ENCODE measurements at regions of chr5 and their contacts with region 1.

Region 1: DNA sequence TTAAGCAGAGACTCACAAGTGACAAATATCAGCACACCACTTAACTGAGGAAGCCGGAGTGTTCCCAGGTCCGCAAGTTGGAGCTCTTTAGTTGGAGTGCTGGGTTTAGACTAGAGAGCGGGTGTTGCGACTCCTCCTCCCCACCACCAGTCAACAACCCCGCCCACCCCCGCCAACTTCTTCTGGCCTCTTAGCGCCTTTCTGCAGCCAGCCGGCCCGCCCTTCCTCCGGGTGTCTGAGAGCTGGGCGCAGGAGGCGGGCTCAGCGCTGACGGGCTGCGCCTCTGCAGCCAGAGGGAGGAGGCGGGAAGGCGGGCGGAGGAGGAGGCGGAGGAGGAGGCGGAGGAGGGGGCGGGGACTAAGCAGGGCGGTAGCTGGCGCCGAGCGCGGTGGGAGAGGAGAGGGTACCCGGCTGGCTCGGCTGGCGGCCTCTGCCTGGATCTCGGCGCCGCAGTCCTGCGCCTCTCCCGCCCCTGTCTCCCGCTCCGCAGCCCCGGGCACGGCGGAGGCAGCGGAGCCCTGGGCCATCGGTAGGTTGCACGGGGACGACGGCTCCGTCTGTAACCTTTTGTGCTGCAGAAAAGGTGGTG is at the start of gene MACIR:
- DNase-seq: peak; percentile 99
- H3K4me3 ChIP-seq: peak within 1 kb of the TSS; percentile 47 to 75 (median 69)
- H3K27ac ChIP-seq: peak within 1 kb of the TSS; percentile 76
- H3K4me1 ChIP-seq: peaks cover 8% of the 10 kb centered on the region
- H3K27me3 ChIP-seq: no peaks in the 10 kb centered on the region
- CTCF ChIP-seq: no peak
- POLR2A ChIP-seq: peak; percentile 69
- total RNA-seq, gene MACIR: 9.3 and 9.6 TPM in 2 replicates

Region 2: GRCh38 chr5:103232393-103232999 is 26.0 kb before region 1 on chr5:
- CTCF ChIA-PET with region 1: interaction called, 28 read pairs
- POLR2A ChIA-PET with region 1: no interaction called
- dilution Hi-C with region 1: no loop called
- intact Hi-C with region 1: loop called (anchors 2 kb)
- DNase-seq: peak; percentile 62
- H3K4me3 ChIP-seq: no peak overlapping the region
- H3K27ac ChIP-seq: no peak overlapping the region
- H3K4me1 ChIP-seq: no peaks in the 10 kb centered on the region
- H3K27me3 ChIP-seq: no peaks in the 10 kb centered on the region
- CTCF ChIP-seq: peak; percentile 57 to 68
- POLR2A ChIP-seq: no peak

Region 3: GRCh38 chr5:103356350-103357091 is 98.1 kb after region 1 on chr5:
- CTCF ChIA-PET with region 1: interaction called, 14 read pairs
- POLR2A ChIA-PET with region 1: no interaction called
- dilution Hi-C with region 1: no loop called
- intact Hi-C with region 1: loop called (anchors 2 kb)
- DNase-seq: no peak
- H3K4me3 ChIP-seq: no peak overlapping the region
- H3K27ac ChIP-seq: no peak overlapping the region
- H3K4me1 ChIP-seq: peaks cover 17% of the 10 kb centered on the region
- H3K27me3 ChIP-seq: no peaks in the 10 kb centered on the region
- CTCF ChIP-seq: no peak
- POLR2A ChIP-seq: no peak

Region 4: DNA sequence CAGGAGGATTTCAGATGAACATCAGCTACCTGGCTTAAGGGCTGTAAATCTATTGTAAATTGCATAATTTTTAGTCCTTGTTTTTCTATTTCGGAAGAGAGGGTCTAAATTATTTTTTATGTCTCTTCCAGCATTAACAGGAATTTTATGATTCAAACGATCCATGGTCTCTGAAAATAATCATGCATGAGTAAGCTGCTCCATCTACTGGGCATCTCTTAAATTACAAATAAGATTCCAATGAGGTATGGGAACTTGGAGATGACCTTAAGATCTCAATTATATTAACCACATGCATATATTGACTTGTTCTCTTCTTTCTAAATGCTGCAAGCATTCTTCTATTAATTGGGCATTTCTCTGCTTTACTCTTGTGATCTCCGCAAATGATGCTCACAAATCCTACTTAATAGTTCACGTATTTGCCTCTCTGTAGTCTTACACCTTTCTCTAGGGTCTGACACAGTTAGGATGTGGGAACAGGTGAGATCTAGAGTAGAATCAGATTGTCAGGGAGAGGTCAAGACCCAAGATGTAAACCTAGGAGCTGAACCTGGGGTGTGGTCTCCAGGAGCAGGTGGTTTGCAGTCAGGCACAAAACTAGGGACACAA is 217.3 kb after region 1 on chr5:
- CTCF ChIA-PET with region 1: interaction called, 35 read pairs
- POLR2A ChIA-PET with region 1: interaction called, 3 read pairs
- dilution Hi-C with region 1: no loop called
- intact Hi-C with region 1: loop called (anchors 1 kb)
- DNase-seq: peak; percentile 66
- H3K4me3 ChIP-seq: no peak overlapping the region
- H3K27ac ChIP-seq: no peak overlapping the region
- H3K4me1 ChIP-seq: no peaks in the 10 kb centered on the region
- H3K27me3 ChIP-seq: peaks cover 0 to 2% of the 10 kb centered on the region in 2 experiments
- CTCF ChIP-seq: peak; percentile 31 to 34
- POLR2A ChIP-seq: no peak

Region 5: GRCh38 chr5:103993031-103993430 is 734.6 kb after region 1 on chr5:
- CTCF ChIA-PET with region 1: no interaction called
- POLR2A ChIA-PET with region 1: no interaction called
- dilution Hi-C with region 1: no loop called
- intact Hi-C with region 1: no loop called
- DNase-seq: no peak
- H3K4me3 ChIP-seq: no peak overlapping the region
- H3K27ac ChIP-seq: no peak overlapping the region
- H3K4me1 ChIP-seq: no peaks in the 10 kb centered on the region
- H3K27me3 ChIP-seq: no peaks in the 10 kb centered on the region
- CTCF ChIP-seq: no peak
- POLR2A ChIP-seq: no peak